ENCODE measurements at regions of chr4 and their contacts with region 1.

Region 1: DNA sequence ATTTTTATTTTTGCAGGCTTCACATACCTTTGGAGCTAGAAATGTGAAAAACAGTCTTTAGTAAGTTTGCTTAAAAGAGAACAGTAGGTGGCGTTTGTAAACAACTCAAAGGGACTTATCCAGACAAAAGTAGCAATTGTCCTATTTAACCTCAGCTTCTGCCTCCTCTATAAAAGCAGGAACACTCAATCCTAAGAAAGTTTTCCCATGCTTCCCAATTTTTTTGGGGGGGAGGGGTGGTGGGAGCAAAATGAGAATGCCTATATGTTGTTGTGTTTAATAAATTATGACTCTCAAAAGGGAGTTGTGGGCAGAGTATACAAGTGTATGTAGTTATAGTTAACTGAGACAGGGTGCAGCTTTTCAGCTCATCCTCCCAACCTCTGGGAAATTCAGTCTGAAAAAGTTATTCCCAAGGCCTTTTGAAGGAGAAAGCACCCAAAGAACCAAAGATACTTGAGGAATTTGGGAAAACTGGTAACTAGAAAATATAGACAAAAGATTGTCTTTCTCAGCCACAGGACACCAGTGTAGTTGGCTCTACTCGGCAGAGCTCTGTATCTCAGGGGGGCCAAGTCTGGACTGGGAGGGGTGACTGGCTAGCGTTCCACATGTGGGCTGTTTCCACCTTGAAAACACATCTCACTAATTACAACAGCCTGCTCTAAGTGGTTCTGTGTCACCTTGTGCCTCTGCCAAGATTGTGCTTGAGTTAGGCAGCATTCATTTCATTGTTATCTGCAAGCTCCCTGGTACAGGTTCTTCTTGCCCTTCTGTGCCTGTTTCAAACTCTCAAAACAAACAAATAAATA is 2.8 kb downstream of the SFRP2 start:
- DNase-seq: no peak
- ATAC-seq: no peak
- H3K4me3 Mint-ChIP-seq: no peak overlapping the region
- H3K27ac Mint-ChIP-seq: no peak overlapping the region
- H3K4me1 Mint-ChIP-seq: peaks cover 27% of the 10 kb centered on the region
- H3K27me3 Mint-ChIP-seq: peaks cover 65% of the 10 kb centered on the region

Region 2: GRCh38 chr4:154018659-154019058 is 232.5 kb after region 1 on chr4:
- CTCF ChIA-PET with region 1: interaction called, 16 read pairs
- POLR2A ChIA-PET with region 1: no interaction called
- intact Hi-C with region 1: loop called (anchors 2 kb)
- DNase-seq: peak; percentile 60
- ATAC-seq: peak; percentile 33
- H3K4me3 Mint-ChIP-seq: no peak overlapping the region
- H3K27ac Mint-ChIP-seq: no peak overlapping the region
- H3K4me1 Mint-ChIP-seq: no peaks in the 10 kb centered on the region
- H3K27me3 Mint-ChIP-seq: peaks cover 5% of the 10 kb centered on the region

Region 3: GRCh38 chr4:154314248-154314647 is 528.1 kb after region 1 on chr4:
- CTCF ChIA-PET with region 1: no interaction called
- POLR2A ChIA-PET with region 1: no interaction called
- intact Hi-C with region 1: loop called in 1 of 2 experiments (anchors 5 kb)
- DNase-seq: no peak
- ATAC-seq: no peak
- H3K4me3 Mint-ChIP-seq: no peak overlapping the region
- H3K27ac Mint-ChIP-seq: no peak overlapping the region
- H3K4me1 Mint-ChIP-seq: no peaks in the 10 kb centered on the region
- H3K27me3 Mint-ChIP-seq: peaks cover 14% of the 10 kb centered on the region

Region 4: DNA sequence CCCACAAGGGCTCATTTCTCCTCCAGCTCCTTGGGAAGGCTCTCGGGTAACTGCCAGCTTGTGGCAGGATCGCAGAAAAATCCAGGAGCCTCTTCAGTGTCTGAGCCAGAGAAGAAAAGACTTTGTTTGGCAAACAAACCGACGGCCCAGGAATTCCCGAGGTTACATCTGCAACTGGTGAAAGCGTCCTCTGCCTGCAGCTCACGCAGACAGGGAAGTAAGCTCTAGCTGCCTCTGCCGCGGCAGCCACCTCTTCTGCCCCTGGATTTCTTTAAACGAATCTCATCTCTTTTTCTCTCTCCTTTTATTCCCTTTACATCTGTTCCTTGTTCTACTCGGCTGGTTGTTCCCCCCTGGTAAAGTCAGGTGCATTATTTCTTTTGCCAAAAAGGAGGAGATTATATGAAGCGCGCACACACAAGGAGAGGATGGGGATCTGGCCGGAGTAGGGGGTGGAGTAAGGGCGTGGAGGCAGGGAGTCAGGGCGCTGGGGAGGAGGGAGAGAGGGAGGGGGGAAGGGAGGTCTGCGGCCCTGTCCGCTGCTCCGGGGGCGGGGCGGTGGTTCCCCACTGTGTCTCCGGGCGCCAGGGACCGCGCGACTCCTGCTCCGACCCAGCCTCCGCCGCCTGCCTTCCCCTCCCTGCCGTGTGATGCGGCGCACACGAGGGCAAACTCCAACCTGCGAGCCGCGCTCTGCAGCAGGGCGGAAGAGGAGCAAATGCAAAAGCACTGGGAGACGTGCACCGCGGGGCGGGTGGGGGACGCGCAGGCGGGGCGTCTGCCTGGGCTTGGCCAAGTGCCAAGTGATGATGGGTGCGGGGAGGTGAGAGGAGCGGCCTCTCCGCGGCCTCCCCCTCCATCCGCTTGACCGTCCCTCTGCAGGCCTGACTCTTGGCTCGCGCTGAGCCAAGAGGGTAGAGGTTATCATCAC is 705.5 kb after region 1 on chr4 and contains the start of gene DCHS2:
- CTCF ChIA-PET with region 1: no interaction called
- POLR2A ChIA-PET with region 1: no interaction called
- intact Hi-C with region 1: loop called (anchors 5 to 10 kb)
- DNase-seq: peak; percentile 55
- ATAC-seq: peak; percentile 71
- H3K4me3 Mint-ChIP-seq: peak within 1 kb of the TSS; percentile 67
- H3K27ac Mint-ChIP-seq: no peak within 1 kb of the TSS
- H3K4me1 Mint-ChIP-seq: peaks cover 18% of the 10 kb centered on the region
- H3K27me3 Mint-ChIP-seq: peaks cover 55% of the 10 kb centered on the region
- total RNA-seq, gene DCHS2: 0.05 to 0.14 TPM

Region 5: GRCh38 chr4:154506253-154506652 is 720.1 kb after region 1 on chr4:
- CTCF ChIA-PET with region 1: no interaction called
- POLR2A ChIA-PET with region 1: no interaction called
- intact Hi-C with region 1: loop called in 1 of 2 experiments (anchors 5 kb)
- DNase-seq: no peak
- ATAC-seq: no peak
- H3K4me3 Mint-ChIP-seq: no peak overlapping the region
- H3K27ac Mint-ChIP-seq: no peak overlapping the region
- H3K4me1 Mint-ChIP-seq: no peaks in the 10 kb centered on the region
- H3K27me3 Mint-ChIP-seq: peaks cover 19% of the 10 kb centered on the region

Measured in activated CD4-positive, alpha-beta T cell treated with anti-CD3 and anti-CD28 coated beads for 36 hours (primary cell).